Body of pancreas (tissue), 4 donors: ENCODE measurements at regions of chr17 and their contacts with region 1.

Region 1: GRCh38 chr17:9120471-9120870 is 99.2 kb downstream of the NTN1 start:
- DNase-seq: no peak
- ATAC-seq: no peak
- H3K4me3 ChIP-seq: no peak overlapping the region
- H3K27ac ChIP-seq: no peak overlapping the region
- H3K4me1 ChIP-seq: peaks cover 4% of the 10 kb centered on the region
- H3K27me3 ChIP-seq: no peaks in the 10 kb centered on the region
- CTCF ChIP-seq: no peak
- POLR2A ChIP-seq: no peak

Region 2: DNA sequence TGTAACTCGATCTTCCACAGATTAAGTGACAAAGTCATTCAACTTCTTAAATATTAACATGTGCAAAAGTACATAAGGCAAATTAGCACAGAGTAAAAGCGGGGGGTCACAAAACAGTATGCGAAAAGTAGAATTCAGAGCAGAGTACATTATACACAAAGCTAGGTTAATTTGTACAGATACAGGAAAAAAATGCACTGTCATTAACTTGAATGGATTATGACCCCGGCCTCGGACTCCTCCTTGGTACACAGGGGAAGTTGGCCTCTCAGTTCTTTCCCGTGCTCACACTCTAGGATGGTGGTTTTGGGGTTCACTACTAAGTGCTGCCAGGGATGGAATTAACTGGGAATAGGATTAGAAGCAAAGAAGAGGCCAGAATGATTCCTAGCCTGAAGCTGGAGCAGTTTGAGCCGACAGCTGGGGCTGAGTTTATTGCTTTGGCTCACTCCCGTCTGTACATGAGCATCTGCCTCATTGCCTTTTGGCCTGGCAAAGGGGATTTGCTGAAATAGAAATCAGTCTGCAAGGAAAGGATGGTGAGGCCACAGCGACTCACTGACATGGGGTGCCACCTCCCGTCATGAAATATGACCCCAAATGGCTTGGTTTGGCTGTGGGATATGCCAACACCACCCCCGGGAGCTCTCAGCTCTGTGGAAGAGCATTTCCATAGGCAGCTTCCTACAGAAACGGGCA is 75.5 kb before region 1 on chr17:
- intact Hi-C with region 1: no loop called
- DNase-seq: no peak
- ATAC-seq: no peak
- H3K4me3 ChIP-seq: no peak overlapping the region
- H3K27ac ChIP-seq: no peak overlapping the region
- H3K4me1 ChIP-seq: no peaks in the 10 kb centered on the region
- H3K27me3 ChIP-seq: no peaks in the 10 kb centered on the region
- CTCF ChIP-seq: no peak
- POLR2A ChIP-seq: no peak

Region 3: GRCh38 chr17:9183306-9183705 is 62.8 kb after region 1 on chr17:
- intact Hi-C with region 1: loop called (anchors 10 kb)
- DNase-seq: no peak
- ATAC-seq: no peak
- H3K4me3 ChIP-seq: no peak overlapping the region
- H3K27ac ChIP-seq: no peak overlapping the region
- H3K4me1 ChIP-seq: peaks cover 10% of the 10 kb centered on the region
- H3K27me3 ChIP-seq: no peaks in the 10 kb centered on the region
- CTCF ChIP-seq: no peak
- POLR2A ChIP-seq: no peak

Region 4: GRCh38 chr17:9228408-9229151 is 108.1 kb after region 1 on chr17:
- intact Hi-C with region 1: no loop called
- DNase-seq: peak in 1 of 4 donors; percentile 30
- ATAC-seq: peak; percentile 78
- H3K4me3 ChIP-seq: no peak overlapping the region
- H3K27ac ChIP-seq: peak overlapping the region in 1 of 4 donors; percentile 25
- H3K4me1 ChIP-seq: peaks cover 9% of the 10 kb centered on the region
- H3K27me3 ChIP-seq: no peaks in the 10 kb centered on the region
- CTCF ChIP-seq: no peak
- POLR2A ChIP-seq: no peak